Activated T-helper 2 cell treated with anti-CD3 and anti-CD28 coated beads, Interferon-gamma antibody, Interleukin-2, Interleukin-4, amounts not matched to agents 10 μg/mL and 5 μg/mL and 100 μg/mL, durations not matched to agents 14 hours and 24 hours and 36 hours (primary cell): ENCODE measurements at regions of chr6 and their contacts with region 1.

Region 1: GRCh38 chr6:157314705-157315321 is 8.5 kb downstream of the TMEM242 start:
- DNase-seq: no peak
- H3K4me3 Mint-ChIP-seq: no peak overlapping the region
- H3K27ac Mint-ChIP-seq: no peak overlapping the region
- H3K4me1 Mint-ChIP-seq: peaks cover 9% of the 10 kb centered on the region
- H3K27me3 Mint-ChIP-seq: no peaks in the 10 kb centered on the region

Region 2: GRCh38 chr6:157298216-157298724 is 16.5 kb before region 1 on chr6:
- intact Hi-C with region 1: no loop called
- DNase-seq: no peak
- H3K4me3 Mint-ChIP-seq: no peak overlapping the region
- H3K27ac Mint-ChIP-seq: no peak overlapping the region
- H3K4me1 Mint-ChIP-seq: peaks cover 6% of the 10 kb centered on the region
- H3K27me3 Mint-ChIP-seq: no peaks in the 10 kb centered on the region

Region 3: GRCh38 chr6:157335829-157336228 is 21.0 kb after region 1 on chr6:
- intact Hi-C with region 1: no loop called
- DNase-seq: no peak
- H3K4me3 Mint-ChIP-seq: no peak overlapping the region
- H3K27ac Mint-ChIP-seq: no peak overlapping the region
- H3K4me1 Mint-ChIP-seq: no peaks in the 10 kb centered on the region
- H3K27me3 Mint-ChIP-seq: peaks cover 31% of the 10 kb centered on the region

Region 4: GRCh38 chr6:157597446-157598312 is 282.9 kb after region 1 on chr6:
- intact Hi-C with region 1: loop called (anchors 1 kb)
- DNase-seq: no peak
- H3K4me3 Mint-ChIP-seq: no peak overlapping the region
- H3K27ac Mint-ChIP-seq: no peak overlapping the region
- H3K4me1 Mint-ChIP-seq: peaks cover 3% of the 10 kb centered on the region
- H3K27me3 Mint-ChIP-seq: peaks cover 2% of the 10 kb centered on the region